ENCODE measurements at regions of chr12 and their contacts with region 1.

Region 1: GRCh38 chr12:65962921-65963861 is 138.9 kb downstream of the HMGA2 start:
- DNase-seq: no peak
- ATAC-seq: no peak
- H3K4me3 ChIP-seq: no peak overlapping the region
- H3K27ac ChIP-seq: no peak overlapping the region
- H3K4me1 ChIP-seq: peaks cover 48% of the 10 kb centered on the region
- H3K27me3 ChIP-seq: no peaks in the 10 kb centered on the region
- CTCF ChIP-seq: peak; percentile 43
- EP300 ChIP-seq: no peak
- POLR2A ChIP-seq: no peak
- RAD21 ChIP-seq: no peak

Region 2: DNA sequence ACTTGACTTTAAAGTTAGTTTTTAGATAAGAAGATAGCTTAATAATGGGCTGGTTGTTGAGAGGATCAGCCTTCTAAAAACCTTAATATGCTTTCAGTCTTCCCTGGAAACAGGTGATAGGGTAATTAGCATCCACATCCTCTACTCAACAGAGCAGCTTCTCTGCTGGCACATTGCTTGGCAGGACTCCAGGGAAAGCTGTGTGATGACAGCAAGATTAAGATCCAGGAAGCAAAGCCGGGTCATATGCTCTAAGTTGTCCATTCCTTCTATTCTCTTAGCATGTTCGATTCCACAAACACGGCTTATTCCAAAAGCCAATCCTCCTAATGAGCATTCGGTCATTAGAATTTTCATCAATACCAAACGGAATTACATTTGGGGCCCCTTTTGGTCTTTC is 51.9 kb before region 1 on chr12:
- CTCF ChIA-PET with region 1: no interaction called
- POLR2A ChIA-PET with region 1: no interaction called
- in situ Hi-C with region 1: no loop called
- intact Hi-C with region 1: no loop called
- DNase-seq: no peak
- ATAC-seq: no peak
- H3K4me3 ChIP-seq: no peak overlapping the region
- H3K27ac ChIP-seq: no peak overlapping the region
- H3K4me1 ChIP-seq: no peaks in the 10 kb centered on the region
- H3K27me3 ChIP-seq: no peaks in the 10 kb centered on the region
- CTCF ChIP-seq: no peak
- EP300 ChIP-seq: no peak
- POLR2A ChIP-seq: no peak
- RAD21 ChIP-seq: no peak

Region 3: DNA sequence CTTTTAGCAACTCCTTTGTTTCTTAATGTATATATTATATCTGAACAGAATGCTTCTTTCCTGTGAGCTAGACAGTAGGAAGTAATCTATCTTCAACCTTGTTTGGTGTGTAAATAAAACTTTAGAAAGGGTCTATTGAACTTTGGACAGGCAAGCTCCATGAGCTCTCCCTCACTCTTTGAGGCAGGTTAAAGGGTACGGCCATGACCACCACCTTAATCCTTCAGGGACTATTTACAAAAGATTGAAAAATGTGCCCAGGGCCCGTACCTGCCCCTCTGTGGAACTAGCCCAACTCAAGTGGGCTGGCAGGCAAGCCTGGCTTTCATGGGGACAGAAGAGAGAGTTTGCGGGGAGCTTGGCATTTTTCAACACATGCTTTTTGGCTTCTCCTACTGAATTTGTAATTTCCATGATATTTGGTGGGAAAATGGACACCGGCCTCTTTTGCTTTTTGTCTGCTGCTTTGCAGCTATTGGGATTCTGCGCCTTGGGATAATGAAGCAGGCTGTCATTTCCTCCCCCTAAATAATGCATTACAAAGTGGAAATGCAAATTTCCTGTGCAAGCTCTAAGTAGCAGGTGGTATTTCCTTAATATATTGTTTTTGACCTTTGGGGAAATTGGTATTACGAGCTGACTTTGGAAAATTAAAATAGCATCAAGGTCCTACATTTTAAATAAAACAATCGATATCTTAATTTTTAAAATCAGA is 32.9 kb before region 1 on chr12:
- CTCF ChIA-PET with region 1: no interaction called
- POLR2A ChIA-PET with region 1: interaction called, 14 read pairs
- in situ Hi-C with region 1: no loop called
- intact Hi-C with region 1: loop called (anchors 5 kb)
- DNase-seq: peak; percentile 96
- ATAC-seq: peak; percentile 88
- H3K4me3 ChIP-seq: peak overlapping the region in 1 of 3 experiments; percentile 25; a peak in 1 of 6 replicates
- H3K27ac ChIP-seq: peak overlapping the region; percentile 76
- H3K4me1 ChIP-seq: peaks cover 100% of the 10 kb centered on the region
- H3K27me3 ChIP-seq: no peaks in the 10 kb centered on the region
- CTCF ChIP-seq: 0 out of 2 replicates have a peak, but pooled peaks have one; percentile 12
- EP300 ChIP-seq: peak in 1 of 2 experiments; percentile 99; a peak in 2 of 4 replicates
- POLR2A ChIP-seq: no peak
- RAD21 ChIP-seq: no peak